HAP-1 (cell line): ENCODE measurements at regions of chr20 and their contacts with region 1.

Region 1: GRCh38 chr20:32516583-32517517 is 68.3 kb downstream of the NOL4L start:
- DNase-seq: no peak
- H3K4me3 ChIP-seq: no peak overlapping the region
- H3K4me1 ChIP-seq: no peaks in the 10 kb centered on the region
- H3K27me3 ChIP-seq: no peaks in the 10 kb centered on the region

Region 2: GRCh38 chr20:31514159-31515071 is 1002.4 kb before region 1 on chr20 and contains the start of gene HM13:
- in situ Hi-C with region 1: no loop called
- DNase-seq: peak; percentile 88 to 93
- H3K4me3 ChIP-seq: peak within 1 kb of the TSS; percentile 96
- H3K4me1 ChIP-seq: peaks cover 25% of the 10 kb centered on the region
- H3K27me3 ChIP-seq: no peaks in the 10 kb centered on the region

Region 3: GRCh38 chr20:32652739-32653526 is 136.1 kb after region 1 on chr20:
- in situ Hi-C with region 1: loop called (anchors 5 kb)
- DNase-seq: peak; percentile 61 to 91
- H3K4me3 ChIP-seq: no peak overlapping the region
- H3K4me1 ChIP-seq: no peaks in the 10 kb centered on the region
- H3K27me3 ChIP-seq: no peaks in the 10 kb centered on the region